ENCODE measurements at regions of chr9 and their contacts with region 1.

Region 1: DNA sequence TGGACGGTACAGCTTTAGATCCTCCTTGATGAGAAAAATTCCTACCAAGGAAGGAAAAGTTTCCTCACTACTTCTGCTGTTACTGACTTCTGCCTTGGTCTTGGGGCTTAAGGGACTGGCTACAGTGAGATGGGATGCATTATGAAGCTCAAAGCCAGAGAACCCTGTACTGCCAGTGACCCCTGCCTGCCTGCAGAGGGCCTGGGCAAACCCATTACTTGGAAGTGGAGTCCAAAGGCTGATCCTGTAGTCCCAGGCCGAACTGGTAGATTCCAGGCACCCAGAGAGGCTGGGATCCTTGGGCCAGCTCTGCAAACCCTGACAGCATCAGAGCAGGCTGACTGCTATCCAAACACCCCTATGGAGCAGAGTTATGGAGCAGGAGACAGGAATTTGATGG is 25.7 kb upstream of the NR5A1 start:
- DNase-seq: no peak
- ATAC-seq: no peak
- H3K4me3 ChIP-seq: no peak overlapping the region
- H3K27ac ChIP-seq: no peak overlapping the region
- H3K4me1 ChIP-seq: peaks cover 3% of the 10 kb centered on the region
- H3K27me3 ChIP-seq: no peaks in the 10 kb centered on the region
- CTCF ChIP-seq: no peak

Region 2: DNA sequence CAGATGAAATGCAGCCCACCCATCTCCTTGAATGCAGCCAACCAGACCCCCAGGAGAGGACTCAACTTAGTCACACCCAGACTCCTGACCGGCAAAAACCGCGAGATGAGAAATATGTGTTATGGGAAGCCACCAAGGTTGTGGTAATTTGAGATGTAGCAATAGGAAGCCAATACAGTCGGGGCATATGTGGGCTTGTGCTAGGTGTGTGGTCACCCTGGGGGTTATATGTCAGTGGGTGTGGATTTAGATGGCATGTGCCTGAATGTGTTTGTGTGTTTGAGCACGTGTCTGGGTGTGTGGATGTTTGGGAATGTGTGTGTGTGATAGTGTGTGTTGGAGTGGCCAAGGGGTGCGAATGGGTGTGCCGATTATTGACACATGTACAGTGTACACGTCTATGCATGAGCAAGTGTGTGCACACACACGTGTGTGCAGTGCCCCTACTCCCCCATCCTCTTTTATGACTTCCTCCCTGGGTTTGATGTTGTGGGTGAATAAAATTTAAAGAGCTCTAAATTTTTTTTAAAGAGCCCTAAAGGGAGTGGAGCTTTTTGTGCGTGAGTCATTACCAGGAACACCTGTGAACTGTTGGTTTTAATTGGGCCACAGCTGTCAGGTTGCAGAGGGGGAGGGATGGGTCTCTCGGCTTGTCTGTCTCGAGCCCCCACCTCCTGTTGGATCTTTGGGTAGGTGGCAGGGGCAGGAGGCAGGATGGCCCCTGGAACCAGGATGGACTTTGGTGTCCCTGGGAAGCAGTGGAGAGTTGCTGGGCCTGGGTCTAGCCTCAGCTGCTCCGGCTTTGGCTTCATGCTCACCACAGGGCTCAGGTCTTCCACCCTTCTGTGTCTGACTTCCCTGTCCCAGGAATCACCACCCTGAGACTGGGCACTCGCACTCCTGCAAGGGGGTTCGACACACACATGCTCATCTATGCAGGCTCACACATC is 434.5 kb before region 1 on chr9:
- CTCF ChIA-PET with region 1: no interaction called
- POLR2A ChIA-PET with region 1: no interaction called
- intact Hi-C with region 1: no loop called
- DNase-seq: peak; percentile 22
- ATAC-seq: 0 out of 2 replicates have a peak, but pooled peaks have one; percentile 13
- H3K4me3 ChIP-seq: no peak overlapping the region
- H3K27ac ChIP-seq: no peak overlapping the region
- H3K4me1 ChIP-seq: peaks cover 26% of the 10 kb centered on the region
- H3K27me3 ChIP-seq: no peaks in the 10 kb centered on the region
- CTCF ChIP-seq: no peak

Region 3: GRCh38 chr9:124419832-124420489 is 112.9 kb before region 1 on chr9:
- CTCF ChIA-PET with region 1: no interaction called
- POLR2A ChIA-PET with region 1: no interaction called
- intact Hi-C with region 1: loop called (anchors 1 kb)
- DNase-seq: no peak
- ATAC-seq: no peak
- H3K4me3 ChIP-seq: no peak overlapping the region
- H3K27ac ChIP-seq: no peak overlapping the region
- H3K4me1 ChIP-seq: no peaks in the 10 kb centered on the region
- H3K27me3 ChIP-seq: no peaks in the 10 kb centered on the region
- CTCF ChIP-seq: peak; percentile 15; the same call in 1 of the 2 replicates

Region 4: GRCh38 chr9:124511426-124511840 is 21.5 kb before region 1 on chr9:
- CTCF ChIA-PET with region 1: interaction called, 11 read pairs
- POLR2A ChIA-PET with region 1: no interaction called
- intact Hi-C with region 1: no loop called
- DNase-seq: no peak
- ATAC-seq: no peak
- H3K4me3 ChIP-seq: no peak overlapping the region
- H3K27ac ChIP-seq: no peak overlapping the region
- H3K4me1 ChIP-seq: no peaks in the 10 kb centered on the region
- H3K27me3 ChIP-seq: no peaks in the 10 kb centered on the region
- CTCF ChIP-seq: no peak

Measured in PC-3 (cell line).